Heart right ventricle (tissue), 16 donors: ENCODE measurements at regions of chr1 and their contacts with region 1.

Region 1: DNA sequence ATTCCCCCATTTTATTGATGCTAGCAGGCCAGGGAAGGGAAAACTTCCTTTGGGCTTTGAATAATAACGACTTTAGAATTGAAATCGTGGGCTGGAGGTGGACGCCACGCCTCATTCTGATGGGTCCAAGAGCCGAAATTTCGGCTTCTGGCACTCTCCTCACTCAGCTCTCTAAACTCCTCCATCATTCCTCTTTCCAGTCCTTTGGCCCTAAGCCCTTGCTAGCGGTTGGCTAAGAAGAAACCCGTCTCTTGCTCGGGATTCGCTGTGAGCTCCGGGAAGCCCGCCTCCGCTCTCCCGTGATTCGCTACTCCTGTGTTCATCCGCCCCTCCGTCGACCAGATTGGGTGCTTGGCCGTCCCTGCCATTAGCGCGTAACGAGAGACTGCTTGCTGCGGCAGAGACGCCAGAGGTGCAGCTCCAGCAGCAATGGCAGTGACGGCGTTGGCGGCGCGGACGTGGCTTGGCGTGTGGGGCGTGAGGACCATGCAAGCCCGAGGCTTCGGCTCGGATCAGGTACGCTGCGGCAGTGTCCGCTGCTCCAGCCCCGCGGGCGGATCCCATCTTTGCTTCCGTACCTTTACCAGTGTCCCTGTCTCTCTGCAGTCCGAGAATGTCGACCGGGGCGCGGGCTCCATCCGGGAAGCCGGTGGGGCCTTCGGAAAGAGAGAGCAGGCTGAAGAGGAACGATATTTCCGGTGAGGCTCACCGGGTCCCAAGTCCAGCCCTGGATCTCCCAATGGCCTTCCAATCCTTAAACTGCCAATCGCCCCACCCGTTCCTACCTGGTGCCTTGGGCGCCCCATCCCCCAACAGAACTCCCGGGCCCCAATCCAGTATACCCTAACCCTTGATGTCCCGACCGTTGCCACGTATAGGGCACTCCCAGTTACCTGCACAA is at the start of gene ATP5IF1:
- DNase-seq: peak; percentile 96 to 98
- ATAC-seq: peak; percentile 91 to 97 (median 96)
- H3K4me3 ChIP-seq: peak within 1 kb of the TSS; percentile 73 to 100 (median 90)
- H3K27ac ChIP-seq: peak within 1 kb of the TSS; percentile 40 to 96 (median 92)
- H3K4me1 ChIP-seq: peaks cover 3 to 57% (median 42%) of the 10 kb centered on the region in 9 donors
- H3K27me3 ChIP-seq: no peaks in the 10 kb centered on the region
- CTCF ChIP-seq: no peak
- total RNA-seq, gene ATP5IF1: 255 to 482 (median 420) TPM

Region 2: DNA sequence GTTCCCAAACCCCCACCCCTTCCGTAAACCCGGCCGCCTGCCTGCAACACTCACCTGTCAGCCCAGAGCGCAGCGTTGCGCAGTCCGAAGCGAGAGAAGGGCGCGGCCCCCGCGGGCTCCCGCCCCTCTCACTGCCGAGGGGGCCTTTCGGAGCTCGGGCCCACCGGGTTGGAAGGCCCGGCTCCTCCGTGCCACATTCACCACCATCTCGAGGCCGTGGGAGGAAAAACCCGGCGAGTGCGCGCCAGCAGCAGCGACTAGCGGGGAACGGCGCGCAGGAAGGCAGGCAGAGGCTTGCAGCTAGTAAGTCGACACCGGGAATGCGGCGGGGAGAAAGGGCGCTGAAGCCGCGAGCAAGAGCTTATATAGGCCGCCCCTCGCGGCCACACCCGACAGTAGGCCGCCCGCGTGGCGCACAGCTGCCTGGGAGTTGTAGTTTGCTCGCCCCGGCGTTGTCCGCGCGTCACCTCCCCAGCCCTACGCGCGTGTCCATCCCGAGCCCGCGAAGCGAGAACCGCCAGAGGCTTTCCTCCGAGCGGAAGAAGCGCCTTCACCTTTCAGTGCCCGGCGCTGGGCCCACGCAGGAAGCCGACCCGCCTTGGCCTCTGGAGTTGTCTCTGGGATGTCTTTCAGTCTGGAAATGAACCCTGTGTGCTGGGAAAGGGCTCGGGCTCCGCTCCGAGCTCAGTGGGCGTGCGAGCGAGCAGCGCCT is 345.7 kb after region 1 on chr1:
- intact Hi-C with region 1: loop called in 2 of 10 experiments (anchors 10 kb)
- DNase-seq: peak; percentile 94 to 95
- ATAC-seq: peak; percentile 98 to 99 (median 99)
- H3K4me3 ChIP-seq: peak overlapping the region; percentile 73 to 98 (median 90)
- H3K27ac ChIP-seq: peak overlapping the region; percentile 72 to 94 (median 87)
- H3K4me1 ChIP-seq: peaks cover 0 to 48% (median 26%) of the 10 kb centered on the region in 9 donors
- H3K27me3 ChIP-seq: no peaks in the 10 kb centered on the region
- CTCF ChIP-seq: peak in 2 of 9 donors; percentile 0 to 29